Activated CD4-positive, alpha-beta T cell treated with anti-CD3 and anti-CD28 coated beads, Interleukin-2, amount 10 ng/mL, durations not matched to agents 24 days and 14 days (primary cell): ENCODE measurements at regions of chr5 and their contacts with region 1.

Region 1: GRCh38 chr5:143605403-143606005 is 202.0 kb upstream of the NR3C1 start:
- DNase-seq: peak; percentile 83
- H3K4me3 Mint-ChIP-seq: peak overlapping the region; percentile 68
- H3K27ac Mint-ChIP-seq: peak overlapping the region; percentile 94
- H3K4me1 Mint-ChIP-seq: peaks cover 31% of the 10 kb centered on the region
- H3K27me3 Mint-ChIP-seq: peaks cover 4% of the 10 kb centered on the region

Region 2: GRCh38 chr5:143002459-143003328 is 602.8 kb before region 1 on chr5:
- intact Hi-C with region 1: loop called (anchors 1 kb)
- DNase-seq: peak; percentile 90
- H3K4me3 Mint-ChIP-seq: peak overlapping the region; percentile 76
- H3K27ac Mint-ChIP-seq: peak overlapping the region; percentile 99
- H3K4me1 Mint-ChIP-seq: peaks cover 69% of the 10 kb centered on the region
- H3K27me3 Mint-ChIP-seq: no peaks in the 10 kb centered on the region

Region 3: DNA sequence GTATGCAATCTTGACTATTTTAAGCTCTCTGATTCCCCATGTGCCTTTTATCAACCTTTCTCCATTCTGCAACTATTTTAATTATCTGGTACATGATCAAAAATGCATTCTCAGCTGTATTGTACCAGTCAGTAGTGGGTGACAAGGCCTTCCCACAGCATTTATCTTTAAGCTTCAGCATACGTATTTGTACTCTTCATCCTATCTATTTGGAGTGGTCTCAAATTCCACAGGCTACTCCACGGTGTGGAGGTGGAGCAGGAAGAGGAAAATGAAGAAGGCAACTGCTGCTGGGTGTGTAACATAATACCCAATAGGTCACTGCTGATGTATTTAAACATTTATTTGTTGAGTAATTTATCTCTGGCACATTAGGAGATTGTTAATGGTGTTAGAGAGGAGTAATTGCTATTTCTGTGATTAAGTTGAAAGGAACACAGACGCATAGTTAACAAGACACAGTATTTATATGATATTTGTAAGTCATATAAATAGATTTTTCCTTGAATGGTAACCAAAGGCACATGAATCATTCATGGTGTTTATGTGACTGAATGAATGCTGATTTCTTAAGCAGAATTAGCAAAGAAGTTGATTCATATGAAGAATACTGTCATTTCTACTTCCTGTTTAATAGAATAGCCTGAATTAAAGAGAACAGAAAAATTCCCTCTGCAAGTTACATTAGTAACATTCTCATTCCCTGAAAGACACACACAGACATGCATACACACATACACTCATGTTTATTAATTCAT is 48.3 kb before region 1 on chr5:
- intact Hi-C with region 1: loop called (anchors 5 kb)
- DNase-seq: no peak
- H3K4me3 Mint-ChIP-seq: no peak overlapping the region
- H3K27ac Mint-ChIP-seq: peak overlapping the region; percentile 49
- H3K4me1 Mint-ChIP-seq: peaks cover 16% of the 10 kb centered on the region
- H3K27me3 Mint-ChIP-seq: no peaks in the 10 kb centered on the region

Region 4: DNA sequence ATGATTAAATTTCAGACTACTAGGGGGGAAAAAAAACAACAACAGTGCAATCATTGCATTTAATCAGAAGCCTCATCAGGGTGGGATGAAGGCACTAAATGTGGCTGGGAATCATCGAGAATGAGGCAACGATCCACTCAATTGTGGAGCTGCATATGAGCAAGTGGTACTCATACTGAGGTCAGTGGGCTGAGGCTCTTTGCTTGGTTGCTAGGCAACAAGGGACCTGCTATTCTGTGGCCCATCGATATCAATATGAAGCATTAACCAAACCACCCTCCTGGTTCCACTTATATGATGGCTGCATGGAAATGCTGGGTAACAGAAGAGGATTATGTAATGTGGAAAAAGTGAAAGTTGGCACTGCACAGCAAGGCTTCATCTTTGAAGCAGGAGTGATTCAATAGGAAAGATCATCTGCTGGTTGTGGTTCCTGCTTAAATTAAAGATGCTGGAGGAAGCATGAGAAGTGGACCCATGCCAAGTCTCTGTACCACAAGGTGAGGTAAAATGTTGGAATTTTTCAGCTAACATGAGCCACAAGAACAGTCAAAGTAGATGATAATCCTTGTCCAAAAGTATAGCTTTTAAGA is 46.7 kb after region 1 on chr5:
- intact Hi-C with region 1: loop called (anchors 1 kb)
- DNase-seq: no peak
- H3K4me3 Mint-ChIP-seq: no peak overlapping the region
- H3K27ac Mint-ChIP-seq: no peak overlapping the region
- H3K4me1 Mint-ChIP-seq: peaks cover 8% of the 10 kb centered on the region
- H3K27me3 Mint-ChIP-seq: peaks cover 2% of the 10 kb centered on the region

Region 5: GRCh38 chr5:143693651-143694252 is 88.2 kb after region 1 on chr5:
- intact Hi-C with region 1: loop called (anchors 2 kb)
- DNase-seq: peak; percentile 59
- H3K4me3 Mint-ChIP-seq: no peak overlapping the region
- H3K27ac Mint-ChIP-seq: peak overlapping the region; percentile 27
- H3K4me1 Mint-ChIP-seq: peaks cover 16% of the 10 kb centered on the region
- H3K27me3 Mint-ChIP-seq: peaks cover 7% of the 10 kb centered on the region